Activated CD4-positive, alpha-beta T cell treated with anti-CD3 and anti-CD28 coated beads for 36 hours (primary cell): ENCODE measurements at regions of chr16 and their contacts with region 1.

Region 1: DNA sequence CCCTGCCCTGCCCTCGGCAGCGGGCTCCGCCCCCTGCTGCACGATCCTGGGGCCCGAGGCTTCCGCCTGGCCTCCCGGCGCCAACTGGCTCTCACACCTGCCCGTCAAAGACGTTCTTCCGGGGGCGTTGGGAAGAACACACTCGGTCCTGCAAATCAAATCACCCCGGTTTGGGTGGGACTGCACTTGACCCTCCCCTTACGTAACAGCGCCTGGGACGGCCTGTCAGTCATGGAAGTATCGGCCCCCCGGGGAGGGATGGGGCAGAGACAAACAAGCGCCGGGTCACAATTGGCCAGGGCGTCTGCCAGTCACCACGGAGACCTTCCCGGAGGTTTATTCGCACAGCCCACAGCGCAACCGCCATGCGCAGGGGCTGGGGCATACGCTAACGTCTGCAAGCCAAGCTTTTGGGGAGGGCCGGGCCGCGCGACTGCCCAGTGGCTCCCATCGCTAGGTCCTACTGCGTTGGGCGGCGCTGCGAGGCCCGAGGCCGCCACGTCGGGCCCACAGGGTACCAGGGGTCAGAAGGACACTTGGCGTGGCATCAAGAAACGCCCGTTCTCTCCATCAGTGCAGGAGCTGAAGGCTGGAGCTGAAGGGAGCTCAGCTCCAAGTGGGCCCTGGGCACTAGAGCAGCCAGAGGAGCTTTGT is 388 bp upstream of the AKTIP start:
- DNase-seq: peak; percentile 100
- ATAC-seq: peak; percentile 92
- H3K4me3 Mint-ChIP-seq: peak overlapping the region; percentile 94
- H3K27ac Mint-ChIP-seq: peak overlapping the region; percentile 96
- H3K4me1 Mint-ChIP-seq: peaks cover 60% of the 10 kb centered on the region
- H3K27me3 Mint-ChIP-seq: no peaks in the 10 kb centered on the region

Region 2: DNA sequence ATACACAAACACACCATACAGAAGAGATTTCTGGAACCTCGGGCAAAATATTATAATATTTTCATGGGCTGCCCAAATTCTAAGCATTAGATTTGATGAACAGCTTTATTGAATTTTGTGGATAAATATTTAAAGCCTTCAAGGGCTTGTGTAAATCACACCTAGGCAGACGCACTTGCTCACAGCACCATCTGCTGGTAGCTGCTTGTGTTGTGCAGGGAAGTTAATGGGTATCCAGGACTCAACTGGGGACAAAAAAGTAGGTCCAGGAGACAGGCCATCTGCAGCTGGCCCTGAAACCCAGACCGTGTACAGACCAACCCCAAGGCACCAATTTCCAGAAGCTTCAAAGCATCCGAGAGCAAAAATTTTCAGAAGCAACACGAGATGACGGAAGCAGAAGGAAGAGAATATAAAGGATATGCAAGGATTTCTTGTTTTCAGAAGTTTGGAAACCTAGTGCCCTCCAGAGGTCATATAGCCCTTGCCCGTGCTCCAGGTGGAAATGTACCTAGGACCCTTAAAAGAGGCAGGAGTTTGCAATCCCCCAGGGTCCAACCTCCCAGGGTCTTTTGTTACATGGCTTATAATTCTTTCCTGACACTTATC is 590.7 kb before region 1 on chr16:
- CTCF ChIA-PET with region 1: no interaction called
- POLR2A ChIA-PET with region 1: no interaction called
- intact Hi-C with region 1: no loop called
- DNase-seq: peak; percentile 67
- ATAC-seq: no peak
- H3K4me3 Mint-ChIP-seq: no peak overlapping the region
- H3K27ac Mint-ChIP-seq: no peak overlapping the region
- H3K4me1 Mint-ChIP-seq: no peaks in the 10 kb centered on the region
- H3K27me3 Mint-ChIP-seq: peaks cover 8% of the 10 kb centered on the region

Region 3: DNA sequence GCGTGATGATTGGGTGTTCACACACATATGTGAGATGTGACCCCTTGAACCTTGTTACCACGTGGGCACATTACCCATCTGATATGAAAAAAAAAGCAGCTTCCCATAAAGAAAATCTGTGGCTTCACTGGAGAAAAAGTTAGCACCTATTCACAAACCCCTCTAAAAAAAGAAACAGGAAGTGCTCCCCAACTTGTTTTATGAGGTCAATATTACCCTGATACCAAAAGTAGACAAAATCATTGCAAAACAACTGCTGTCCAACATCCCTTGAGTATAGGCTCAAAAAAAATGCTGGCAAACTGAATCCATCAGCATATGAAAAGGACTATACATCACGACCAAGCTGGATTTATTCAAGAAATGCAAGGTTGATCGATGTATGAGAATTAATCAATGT is 168.8 kb before region 1 on chr16:
- CTCF ChIA-PET with region 1: no interaction called
- POLR2A ChIA-PET with region 1: no interaction called
- intact Hi-C with region 1: no loop called
- DNase-seq: no peak
- ATAC-seq: no peak
- H3K4me3 Mint-ChIP-seq: no peak overlapping the region
- H3K27ac Mint-ChIP-seq: no peak overlapping the region
- H3K4me1 Mint-ChIP-seq: peaks cover 2% of the 10 kb centered on the region
- H3K27me3 Mint-ChIP-seq: no peaks in the 10 kb centered on the region

Region 4: GRCh38 chr16:53372992-53373871 is 130.2 kb before region 1 on chr16:
- CTCF ChIA-PET with region 1: interaction called, 3 read pairs
- POLR2A ChIA-PET with region 1: no interaction called
- intact Hi-C with region 1: loop called (anchors 1 to 5 kb)
- DNase-seq: peak; percentile 88
- ATAC-seq: peak; percentile 97
- H3K4me3 Mint-ChIP-seq: no peak overlapping the region
- H3K27ac Mint-ChIP-seq: peak overlapping the region; percentile 61
- H3K4me1 Mint-ChIP-seq: peaks cover 24% of the 10 kb centered on the region
- H3K27me3 Mint-ChIP-seq: no peaks in the 10 kb centered on the region

Region 5: DNA sequence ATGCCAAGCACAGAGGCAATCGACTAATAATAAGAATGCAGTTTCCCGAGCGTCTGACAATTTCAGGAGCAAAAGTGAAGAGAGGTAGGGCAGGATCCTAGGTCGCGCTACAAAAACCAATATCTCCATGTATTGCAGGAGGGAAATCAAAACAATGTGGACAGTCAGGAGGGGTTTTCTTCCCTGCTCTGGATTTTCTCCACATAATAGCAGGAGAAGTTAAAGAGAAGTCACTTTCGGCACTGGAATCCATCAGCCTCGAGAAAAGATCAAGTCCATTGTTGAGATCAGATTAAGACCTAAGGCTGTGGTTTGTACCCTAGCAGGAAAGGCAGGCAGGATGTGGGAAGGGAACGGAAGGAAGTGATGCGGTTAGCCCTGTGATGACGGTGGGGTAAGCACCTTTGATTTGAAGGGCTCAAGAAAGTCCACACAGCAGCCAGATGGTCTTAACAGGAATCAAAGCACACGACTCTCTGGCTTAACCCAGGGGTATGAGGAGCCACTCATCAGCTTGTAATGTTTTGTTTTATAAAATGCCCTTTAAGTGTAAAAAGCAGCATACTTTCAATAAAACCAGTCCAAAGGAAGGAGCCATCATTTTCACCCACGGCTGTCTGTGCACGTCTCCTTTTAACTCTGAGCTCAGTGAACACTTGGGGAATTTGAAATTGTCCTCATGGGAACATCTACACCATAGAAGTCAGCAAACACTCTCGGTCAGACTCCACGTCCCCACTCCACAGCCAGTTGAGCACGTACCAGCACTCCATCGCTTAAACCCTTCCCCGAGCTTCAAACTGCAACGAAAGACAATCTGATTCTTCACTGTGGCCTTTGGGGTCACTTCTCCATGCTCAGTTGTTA is 15.4 kb after region 1 on chr16:
- CTCF ChIA-PET with region 1: interaction called, 5 read pairs
- POLR2A ChIA-PET with region 1: interaction called, 4 read pairs
- intact Hi-C with region 1: loop called in 1 of 2 experiments (anchors 1 kb)
- DNase-seq: peak; percentile 84
- ATAC-seq: peak; percentile 86
- H3K4me3 Mint-ChIP-seq: peak overlapping the region; percentile 58
- H3K27ac Mint-ChIP-seq: peak overlapping the region; percentile 85
- H3K4me1 Mint-ChIP-seq: peaks cover 46% of the 10 kb centered on the region
- H3K27me3 Mint-ChIP-seq: no peaks in the 10 kb centered on the region

Region 6: DNA sequence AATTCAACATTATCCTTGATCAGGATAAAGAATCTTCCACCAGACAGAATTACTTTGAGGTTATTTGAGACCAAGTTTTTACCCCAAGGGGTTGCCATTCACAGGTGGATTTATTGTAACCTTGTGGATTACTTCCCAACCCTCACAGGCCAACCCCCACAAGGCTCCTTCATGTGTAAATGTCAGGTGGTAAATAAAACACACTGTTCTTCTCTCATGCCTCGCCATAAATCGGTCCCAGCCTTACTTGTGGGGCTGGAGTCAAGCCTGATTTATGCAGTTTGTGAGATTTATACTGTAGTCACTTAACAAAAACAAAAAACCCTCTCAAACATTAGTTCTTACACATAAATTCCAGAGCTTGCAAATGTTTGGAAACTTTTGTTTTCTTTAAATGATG is 881.7 kb after region 1 on chr16:
- CTCF ChIA-PET with region 1: no interaction called
- POLR2A ChIA-PET with region 1: no interaction called
- intact Hi-C with region 1: no loop called
- DNase-seq: no peak
- ATAC-seq: no peak
- H3K4me3 Mint-ChIP-seq: no peak overlapping the region
- H3K27ac Mint-ChIP-seq: no peak overlapping the region
- H3K4me1 Mint-ChIP-seq: no peaks in the 10 kb centered on the region
- H3K27me3 Mint-ChIP-seq: peaks cover 14% of the 10 kb centered on the region